ENCODE measurements at regions of chr21 and their contacts with region 1.

Region 1: DNA sequence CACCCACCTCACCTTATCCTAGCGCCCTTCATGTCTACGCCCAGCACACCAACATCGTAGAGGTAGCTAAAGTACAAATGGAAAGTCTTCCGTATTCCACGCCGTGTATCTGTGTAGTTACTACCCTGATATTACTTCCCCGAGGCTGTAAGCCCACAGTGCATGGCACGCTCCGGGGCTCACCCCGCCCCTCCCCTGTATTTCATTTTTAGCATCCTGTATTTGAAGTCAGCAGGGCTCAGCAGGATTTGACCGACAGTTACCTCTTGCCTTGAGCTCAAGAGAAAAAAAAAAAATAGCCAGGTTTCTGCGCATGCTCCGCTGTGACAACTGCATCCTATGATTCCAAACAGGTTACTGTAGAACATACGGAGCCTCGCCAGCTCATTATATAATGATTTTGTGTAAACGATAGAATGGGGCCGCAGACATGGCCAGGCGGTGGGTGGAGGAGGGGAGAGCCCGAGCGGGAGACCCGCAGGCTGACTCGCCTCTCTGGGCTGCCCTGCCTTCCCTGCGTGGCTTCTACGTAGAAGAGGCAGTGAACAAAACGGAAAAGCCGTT is 1.3 kb downstream of the ABCG1 start:
- DNase-seq: peak; percentile 93 to 98 (median 98)
- H3K4me3 ChIP-seq: peak overlapping the region; percentile 57 to 91 (median 80)
- H3K27ac ChIP-seq: peak overlapping the region; percentile 54 to 66
- H3K4me1 ChIP-seq: peaks cover 8 to 37% (median 28%) of the 10 kb centered on the region in 4 experiments
- H3K27me3 ChIP-seq: no peaks in the 10 kb centered on the region

Region 2: GRCh38 chr21:42164064-42164789 is 56.0 kb before region 1 on chr21:
- CTCF ChIA-PET with region 1: interaction called, 10 read pairs
- POLR2A ChIA-PET with region 1: interaction called, 4 read pairs
- DNase-seq: peak; percentile 49 to 64 (median 54)
- H3K4me3 ChIP-seq: no peak overlapping the region
- H3K27ac ChIP-seq: no peak overlapping the region
- H3K4me1 ChIP-seq: peaks cover 0 to 30% (median 26%) of the 10 kb centered on the region in 4 experiments
- H3K27me3 ChIP-seq: no peaks in the 10 kb centered on the region

Region 3: DNA sequence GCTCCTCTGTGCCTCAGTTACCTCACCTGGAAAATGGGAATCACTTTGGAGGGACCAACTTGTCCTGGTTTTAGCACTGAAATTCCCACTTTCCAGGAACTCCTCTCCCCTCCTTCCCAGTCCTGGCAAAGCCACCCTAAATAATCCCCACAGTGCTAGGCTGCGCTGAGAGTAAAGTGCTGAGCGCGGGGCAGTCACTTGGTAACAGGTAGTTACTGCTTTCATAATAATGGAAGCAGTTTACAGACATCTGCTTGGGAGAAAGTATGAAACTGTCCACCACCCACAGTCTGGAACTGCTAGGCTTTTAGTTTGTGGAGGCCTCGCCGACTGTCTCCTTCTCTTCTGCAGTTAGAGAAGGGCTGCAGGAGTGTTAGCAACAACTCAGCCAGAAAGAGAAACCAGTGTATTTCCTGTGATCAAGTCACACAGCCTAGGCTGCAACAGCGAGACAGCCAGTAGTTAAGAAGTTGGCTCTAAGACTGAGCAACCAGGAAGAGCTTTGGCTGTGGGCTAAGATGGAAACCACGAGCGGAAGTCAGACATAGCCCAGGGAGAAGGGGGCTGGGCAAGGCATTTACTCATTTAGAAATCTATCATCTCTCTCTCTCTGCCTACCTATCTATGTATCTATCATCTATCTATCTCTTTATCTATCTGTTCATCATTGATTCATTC is 32.1 kb before region 1 on chr21:
- CTCF ChIA-PET with region 1: interaction called, 9 read pairs
- POLR2A ChIA-PET with region 1: interaction called, 11 read pairs
- DNase-seq: peak; percentile 85 to 93 (median 92)
- H3K4me3 ChIP-seq: peak overlapping the region in 6 of 7 experiments; percentile 13 to 58 (median 31)
- H3K27ac ChIP-seq: peak overlapping the region in 1 of 2 experiments; percentile 73
- H3K4me1 ChIP-seq: peaks cover 21 to 78% (median 59%) of the 10 kb centered on the region in 4 experiments
- H3K27me3 ChIP-seq: no peaks in the 10 kb centered on the region

Region 4: GRCh38 chr21:42238185-42238934 is 18.1 kb after region 1 on chr21:
- CTCF ChIA-PET with region 1: interaction called, 39 read pairs
- POLR2A ChIA-PET with region 1: interaction called, 21 read pairs
- DNase-seq: peak in 2 of 3 donors; percentile 62 to 74
- H3K4me3 ChIP-seq: no peak overlapping the region
- H3K27ac ChIP-seq: no peak overlapping the region
- H3K4me1 ChIP-seq: peaks cover 23 to 62% (median 53%) of the 10 kb centered on the region in 4 experiments
- H3K27me3 ChIP-seq: no peaks in the 10 kb centered on the region

Region 5: GRCh38 chr21:42350896-42351543 is 130.8 kb after region 1 on chr21 and contains the start of gene TFF2:
- CTCF ChIA-PET with region 1: no interaction called
- POLR2A ChIA-PET with region 1: no interaction called
- DNase-seq: no peak
- H3K4me3 ChIP-seq: no peak within 1 kb of the TSS
- H3K27ac ChIP-seq: no peak within 1 kb of the TSS
- H3K4me1 ChIP-seq: no peaks in the 10 kb centered on the region
- H3K27me3 ChIP-seq: peaks cover 0 to 2% (median 0%) of the 10 kb centered on the region in 5 experiments

Region 6: DNA sequence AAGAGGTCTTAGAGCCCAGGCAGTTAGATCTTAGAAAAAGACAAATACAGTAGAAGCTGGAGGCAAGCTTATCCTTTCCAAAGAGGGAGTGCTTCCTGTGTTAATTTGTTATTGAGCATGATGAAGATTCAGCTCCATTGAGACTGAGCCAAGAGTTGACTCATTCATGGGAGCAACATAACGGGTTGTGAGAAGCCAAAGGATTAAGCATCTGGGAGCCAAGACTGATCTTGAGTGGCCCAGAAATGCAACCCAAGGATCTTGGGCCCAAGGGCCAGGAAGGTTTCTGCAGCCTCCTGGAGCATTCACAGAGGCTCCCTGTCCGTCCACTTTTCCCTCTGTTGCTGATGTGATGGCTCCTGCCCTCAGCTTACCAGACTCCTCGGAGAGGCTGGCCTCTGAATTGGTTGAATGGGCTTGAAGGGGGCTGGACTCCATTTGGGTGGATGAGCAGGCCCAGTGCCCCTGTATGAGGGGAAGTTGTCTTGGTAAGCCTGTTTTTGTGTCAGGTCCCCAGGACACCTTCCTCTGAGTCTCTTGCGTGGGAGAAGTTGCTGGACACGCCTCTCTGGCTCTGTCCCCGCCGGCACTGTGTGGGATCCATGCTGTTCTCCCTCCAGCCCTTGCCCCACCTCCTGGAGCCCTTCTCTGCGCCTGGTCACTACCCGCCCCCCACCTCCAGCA is 475.6 kb after region 1 on chr21:
- CTCF ChIA-PET with region 1: no interaction called
- POLR2A ChIA-PET with region 1: no interaction called
- DNase-seq: no peak
- H3K4me3 ChIP-seq: no peak overlapping the region
- H3K27ac ChIP-seq: no peak overlapping the region
- H3K4me1 ChIP-seq: peaks cover 0 to 1% (median 0%) of the 10 kb centered on the region in 4 experiments
- H3K27me3 ChIP-seq: no peaks in the 10 kb centered on the region